Cardiac septum (tissue), 1 donor: ENCODE measurements at regions of chr16 and their contacts with region 1.

Region 1: GRCh38 chr16:66364117-66364967 is 2.1 kb upstream of the CDH5 start:
- DNase-seq: peak; percentile 83

Region 2: DNA sequence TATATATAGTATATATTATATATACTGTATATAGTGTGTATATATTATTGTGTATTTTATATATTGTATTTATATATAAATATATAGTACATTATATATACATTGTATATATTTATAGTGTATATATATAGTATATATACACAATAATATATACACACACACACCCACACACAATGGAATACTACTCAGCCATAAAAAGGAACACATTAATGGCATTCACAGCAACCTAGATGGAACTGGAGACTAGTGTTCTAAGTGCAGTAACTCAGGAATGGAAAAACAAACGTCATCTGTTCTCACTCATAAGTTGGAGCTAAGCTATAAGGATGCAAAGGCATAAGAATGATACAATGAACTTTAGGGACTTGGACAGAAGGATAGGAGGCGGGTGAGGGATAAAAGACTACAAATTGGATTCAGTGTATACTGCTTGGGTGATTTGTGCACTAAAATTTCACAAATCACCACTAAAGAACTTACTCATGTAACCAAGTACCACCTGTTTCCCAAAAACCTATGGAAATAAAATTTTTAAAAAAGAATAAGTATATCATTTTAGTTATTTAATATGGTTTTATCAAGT is 1040.6 kb before region 1 on chr16:
- intact Hi-C with region 1: no loop called
- DNase-seq: no peak

Region 3: GRCh38 chr16:66399930-66400329 is 35.6 kb after region 1 on chr16:
- intact Hi-C with region 1: loop called (anchors 5 kb)
- DNase-seq: peak; percentile 58

Region 4: GRCh38 chr16:66457888-66458287 is 93.5 kb after region 1 on chr16:
- intact Hi-C with region 1: no loop called
- DNase-seq: peak; percentile 46